AG04449 (cell line): ENCODE measurements at regions of chr18 and their contacts with region 1.

Region 1: GRCh38 chr18:2536493-2536892 is 34.8 kb downstream of the METTL4 start:
- DNase-seq: no peak
- H3K4me3 ChIP-seq: no peak overlapping the region
- CTCF ChIP-seq: no peak

Region 2: DNA sequence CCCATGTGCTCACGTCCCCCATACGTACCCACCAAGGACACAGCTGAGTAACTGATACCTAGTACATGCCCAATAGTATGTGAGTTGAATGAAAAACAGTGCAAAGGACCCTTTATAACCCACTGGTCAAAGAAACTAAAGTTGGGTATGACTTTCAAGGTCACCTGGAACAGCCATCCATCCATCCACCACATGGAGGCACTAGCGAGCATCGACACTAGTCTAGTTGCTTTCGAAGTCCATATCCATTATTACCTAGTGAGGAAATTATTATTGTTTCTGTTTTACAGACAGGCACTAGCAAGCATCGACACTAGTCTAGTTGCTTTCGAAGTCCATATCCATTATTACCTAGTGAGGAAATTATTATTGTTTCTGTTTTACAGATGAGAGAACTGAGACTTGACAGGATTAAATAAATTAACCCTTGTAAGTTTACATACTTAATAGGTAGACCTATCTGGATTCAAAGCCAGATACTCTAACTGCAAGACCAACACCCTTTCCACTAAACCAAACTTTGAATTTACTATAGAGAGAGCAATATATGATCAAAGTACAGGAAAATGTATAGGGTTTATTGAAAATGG is 198.8 kb before region 1 on chr18:
- CTCF ChIA-PET with region 1: interaction called, 48 read pairs
- POLR2A ChIA-PET with region 1: no interaction called
- DNase-seq: no peak
- H3K4me3 ChIP-seq: no peak overlapping the region
- CTCF ChIP-seq: peak; percentile 65

Region 3: GRCh38 chr18:2471523-2471922 is 65.0 kb before region 1 on chr18:
- CTCF ChIA-PET with region 1: no interaction called
- POLR2A ChIA-PET with region 1: no interaction called
- DNase-seq: no peak
- H3K4me3 ChIP-seq: no peak overlapping the region
- CTCF ChIP-seq: no peak